Posterior vena cava (tissue), 2 donors: ENCODE measurements at regions of chr11 and their contacts with region 1.

Region 1: DNA sequence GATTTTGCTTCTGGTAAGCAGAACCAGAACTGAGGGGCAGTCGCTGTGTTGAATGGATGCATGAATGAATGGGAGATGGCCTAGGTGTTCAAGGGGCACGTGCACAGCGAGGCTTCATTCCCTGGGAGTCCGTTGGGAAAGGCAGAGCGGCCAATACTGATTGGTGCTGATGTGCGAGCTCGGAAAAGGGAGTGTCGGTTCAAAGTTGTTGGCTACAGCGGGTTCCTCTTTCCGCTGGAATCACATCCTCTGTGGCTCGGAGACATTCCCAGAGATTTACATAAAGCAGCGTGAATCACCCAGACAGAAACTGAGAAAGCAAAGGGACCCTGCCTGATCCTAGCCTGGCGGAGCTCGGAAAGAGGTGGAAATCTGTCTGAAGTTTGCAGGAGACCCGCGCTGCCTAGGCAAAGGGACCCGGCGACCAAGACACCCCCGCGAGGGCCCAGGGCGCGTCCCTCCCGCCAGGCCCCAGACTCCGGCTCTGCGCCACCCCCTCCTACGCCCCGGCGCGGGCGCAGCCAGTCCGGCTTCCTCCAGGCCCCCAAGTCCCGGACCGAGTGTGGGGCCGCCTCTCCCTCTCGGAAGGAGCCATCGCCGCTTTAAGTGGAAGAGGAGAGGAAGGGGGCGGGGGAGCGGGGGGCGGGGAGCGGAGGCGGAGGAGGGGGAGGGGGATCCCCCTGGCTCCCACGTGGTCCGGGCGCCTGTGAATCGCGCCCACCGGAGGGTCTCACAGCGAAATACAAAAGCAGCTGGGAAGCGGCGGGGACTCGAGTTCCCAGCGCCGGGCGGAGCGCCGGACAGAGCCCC is at the start of gene FJX1:
- DNase-seq: peak; percentile 89
- total RNA-seq, gene FJX1: 5.8 to 11.2 TPM

Region 2: DNA sequence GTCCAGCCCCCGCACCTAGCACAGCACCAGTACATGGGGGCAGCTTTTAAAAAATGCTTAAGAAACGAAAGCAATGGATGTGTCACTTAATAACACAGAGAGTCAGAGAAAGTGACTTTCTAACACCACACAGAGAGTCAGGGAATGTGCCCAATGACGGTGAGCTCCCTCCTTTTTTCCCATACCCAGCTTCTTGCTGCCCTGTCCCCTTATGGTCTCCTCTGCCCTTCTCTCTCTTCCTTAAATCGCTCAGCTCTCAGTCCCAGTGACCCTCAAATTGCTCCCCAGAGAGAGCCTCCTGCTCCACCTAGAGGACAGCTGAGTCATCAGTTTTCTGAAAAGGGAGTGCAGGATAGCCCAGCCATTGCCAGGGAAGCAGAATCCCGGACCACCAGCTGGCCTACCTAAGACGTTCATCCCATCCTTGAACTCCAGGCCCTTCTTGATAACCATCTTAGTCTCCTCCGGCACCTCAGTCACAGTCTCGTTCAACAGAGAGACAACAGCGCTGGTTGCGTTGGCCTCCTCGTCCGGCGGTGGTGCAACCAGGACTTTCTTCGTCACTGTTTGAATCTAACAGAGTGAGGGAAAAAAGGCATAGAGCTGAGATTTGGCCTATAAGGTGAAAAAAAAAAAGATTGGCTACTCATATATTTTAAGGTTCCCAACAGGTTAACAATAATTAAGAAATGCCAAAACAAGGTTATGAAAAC is 312.1 kb before region 1 on chr11:
- intact Hi-C with region 1: no loop called
- DNase-seq: no peak

Region 3: GRCh38 chr11:35662649-35663407 is 44.9 kb after region 1 on chr11 and contains the start of gene TRIM44:
- intact Hi-C with region 1: loop called in 1 of 2 experiments (anchors 5 kb)
- DNase-seq: peak; percentile 95
- total RNA-seq, gene TRIM44: 56.5 to 67.6 TPM

Region 4: DNA sequence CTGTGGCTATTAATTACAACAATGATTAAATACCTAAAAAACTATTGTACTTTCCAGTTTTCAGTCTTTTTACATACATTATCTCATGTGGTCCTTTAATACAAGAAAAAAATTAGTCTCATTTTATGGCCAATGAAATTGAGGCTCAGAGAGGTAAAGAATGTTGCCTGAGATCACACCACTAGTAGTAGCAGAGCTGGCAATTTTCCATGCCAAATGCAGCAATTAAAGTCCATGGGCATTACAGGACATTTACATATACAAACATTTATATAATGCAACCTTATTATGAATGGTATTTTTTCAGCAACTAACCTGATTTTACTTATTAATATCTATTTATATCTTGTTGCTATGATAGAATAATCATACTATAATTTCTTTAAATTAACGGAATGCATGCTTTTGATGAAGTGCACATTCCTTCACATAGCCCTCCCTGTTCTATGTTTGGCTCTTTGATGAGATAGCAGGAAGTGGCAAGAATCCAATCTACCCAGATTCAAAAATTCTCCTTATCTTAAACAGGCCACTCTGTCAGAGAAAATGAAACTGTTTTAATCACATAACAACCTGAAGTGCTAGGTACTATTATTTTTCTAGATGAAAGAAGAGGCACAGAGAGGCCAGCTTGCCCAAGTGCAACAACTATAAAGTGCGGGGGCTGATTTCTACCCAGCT is 205.1 kb after region 1 on chr11:
- intact Hi-C with region 1: loop called in 1 of 2 experiments (anchors 5 kb)
- DNase-seq: no peak

Region 5: DNA sequence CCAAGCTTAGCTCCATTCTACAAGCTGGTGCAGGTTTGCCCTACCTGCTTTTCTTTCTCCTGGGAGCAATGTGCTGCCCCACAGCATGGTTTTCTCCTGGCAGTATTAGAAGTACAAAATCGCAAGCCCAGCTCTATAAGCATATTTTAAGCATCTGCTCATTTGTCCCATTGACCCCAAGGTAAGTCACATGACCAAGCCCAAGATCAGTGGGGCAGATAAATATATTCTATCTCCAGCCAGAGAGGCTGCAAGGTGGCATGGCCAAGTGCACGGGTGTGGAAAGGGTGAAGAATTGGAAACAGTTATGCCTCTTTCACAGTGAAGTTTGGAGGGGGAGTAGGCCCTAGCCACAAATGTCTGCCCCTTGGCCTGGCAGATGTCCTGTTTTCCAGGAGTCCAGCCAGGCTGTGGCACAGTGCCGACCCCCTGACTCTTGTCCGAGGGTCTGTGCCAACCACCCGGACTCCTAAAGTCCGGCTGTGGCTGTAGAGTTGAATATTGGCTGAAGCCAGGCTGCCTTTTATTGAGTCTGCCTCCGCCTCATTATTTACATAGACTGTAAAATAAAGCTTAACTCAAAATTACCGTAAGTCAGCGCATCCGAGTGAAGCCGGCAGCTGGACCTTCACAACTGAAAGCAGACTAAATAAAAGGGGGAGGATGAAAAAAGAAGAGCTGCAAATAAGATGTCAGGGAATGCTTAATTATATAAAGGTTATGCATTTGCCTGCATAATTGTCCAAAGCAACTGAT is 505.6 kb after region 1 on chr11:
- intact Hi-C with region 1: loop called in 1 of 2 experiments (anchors 10 kb)
- DNase-seq: no peak

Region 6: DNA sequence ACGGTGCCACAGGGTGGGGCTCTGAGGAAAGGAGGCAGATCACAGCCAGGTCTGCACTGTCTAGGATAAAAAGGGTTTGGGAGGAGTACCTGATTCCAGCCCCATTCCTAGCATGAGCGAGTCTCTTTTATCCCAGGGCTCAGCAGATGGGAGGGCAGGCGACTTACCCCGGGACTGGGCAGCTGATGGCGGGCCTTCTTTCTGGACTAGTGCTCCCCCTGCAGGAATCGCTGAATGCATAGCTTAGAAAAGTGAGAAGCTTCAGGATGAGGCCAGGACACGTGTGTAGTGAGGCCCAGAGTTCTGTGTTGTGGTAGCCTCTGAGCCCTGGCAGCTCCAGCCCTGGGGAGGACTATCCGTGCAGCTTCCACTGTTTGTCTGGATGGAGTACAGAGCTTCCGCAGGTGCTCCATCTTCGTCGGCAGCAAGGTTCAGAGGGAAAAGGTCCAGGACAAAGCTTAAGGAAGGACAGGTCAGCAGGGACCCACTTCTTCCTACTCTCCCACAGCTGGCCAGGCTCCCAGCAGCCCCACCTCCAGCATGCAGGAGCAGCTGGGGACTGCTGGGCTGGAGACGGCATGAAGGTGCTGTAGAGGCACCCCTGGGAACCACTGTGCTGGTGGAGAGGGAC is 641.0 kb after region 1 on chr11:
- intact Hi-C with region 1: loop called (anchors 2 to 10 kb)
- DNase-seq: no peak

Region 7: DNA sequence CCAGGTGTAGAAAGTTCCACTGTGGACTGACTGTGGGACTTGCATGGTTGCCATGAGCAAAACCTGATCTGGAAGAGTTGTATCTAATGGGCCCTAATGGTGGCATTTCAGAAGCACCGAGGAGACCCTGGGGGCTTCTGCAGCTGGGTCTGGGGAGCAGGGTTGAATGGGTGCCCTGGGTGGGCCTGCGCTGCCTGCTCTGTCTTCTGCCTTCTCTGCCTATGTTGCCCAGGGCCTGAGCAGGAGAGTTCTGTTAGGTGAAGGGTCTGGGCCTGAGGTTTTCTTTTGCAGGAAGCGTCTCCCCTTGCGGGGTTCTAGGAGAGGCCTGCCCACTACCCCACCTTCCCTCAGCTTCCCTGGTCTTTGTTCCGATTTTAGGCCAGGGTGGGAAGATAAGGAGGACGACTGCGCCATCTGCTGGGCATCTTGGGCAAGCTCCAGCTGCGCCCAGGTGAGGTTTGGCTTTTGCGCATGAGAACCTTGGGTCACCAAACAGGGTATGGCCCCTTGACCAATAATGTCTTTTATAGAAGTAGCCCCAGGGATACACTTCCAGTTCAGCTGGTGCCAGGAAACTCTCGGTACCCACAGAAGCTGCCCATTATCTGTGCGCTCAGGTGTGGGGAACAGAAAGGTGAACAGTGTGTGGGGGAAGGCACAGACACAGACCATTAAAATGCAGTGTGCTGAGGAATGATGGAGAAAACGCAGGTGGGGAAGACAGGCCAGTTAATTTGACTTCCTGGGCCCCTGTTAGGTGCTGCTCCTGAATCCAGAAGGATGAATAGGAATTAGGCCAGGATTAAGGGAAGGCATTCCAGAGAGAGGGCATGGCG is 648.1 kb after region 1 on chr11:
- intact Hi-C with region 1: loop called in 1 of 2 experiments (anchors 2 kb)
- DNase-seq: no peak